ENCODE measurements at regions of chr18 and their contacts with region 1.

Region 1: GRCh38 chr18:49431165-49431962 is 29.1 kb downstream of the DYM start:
- DNase-seq: peak in 1 of 2 experiments; percentile 24
- H3K4me3 ChIP-seq: no peak overlapping the region
- H3K4me1 ChIP-seq: peaks cover 16% of the 10 kb centered on the region
- H3K27me3 ChIP-seq: no peaks in the 10 kb centered on the region

Region 2: GRCh38 chr18:48675352-48675761 is 756.0 kb before region 1 on chr18:
- in situ Hi-C with region 1: loop called (anchors 10 kb)
- DNase-seq: peak; percentile 57 to 89
- H3K4me3 ChIP-seq: no peak overlapping the region
- H3K4me1 ChIP-seq: peaks cover 3% of the 10 kb centered on the region; the same call in 1 of the 2 replicates
- H3K27me3 ChIP-seq: no peaks in the 10 kb centered on the region

Region 3: DNA sequence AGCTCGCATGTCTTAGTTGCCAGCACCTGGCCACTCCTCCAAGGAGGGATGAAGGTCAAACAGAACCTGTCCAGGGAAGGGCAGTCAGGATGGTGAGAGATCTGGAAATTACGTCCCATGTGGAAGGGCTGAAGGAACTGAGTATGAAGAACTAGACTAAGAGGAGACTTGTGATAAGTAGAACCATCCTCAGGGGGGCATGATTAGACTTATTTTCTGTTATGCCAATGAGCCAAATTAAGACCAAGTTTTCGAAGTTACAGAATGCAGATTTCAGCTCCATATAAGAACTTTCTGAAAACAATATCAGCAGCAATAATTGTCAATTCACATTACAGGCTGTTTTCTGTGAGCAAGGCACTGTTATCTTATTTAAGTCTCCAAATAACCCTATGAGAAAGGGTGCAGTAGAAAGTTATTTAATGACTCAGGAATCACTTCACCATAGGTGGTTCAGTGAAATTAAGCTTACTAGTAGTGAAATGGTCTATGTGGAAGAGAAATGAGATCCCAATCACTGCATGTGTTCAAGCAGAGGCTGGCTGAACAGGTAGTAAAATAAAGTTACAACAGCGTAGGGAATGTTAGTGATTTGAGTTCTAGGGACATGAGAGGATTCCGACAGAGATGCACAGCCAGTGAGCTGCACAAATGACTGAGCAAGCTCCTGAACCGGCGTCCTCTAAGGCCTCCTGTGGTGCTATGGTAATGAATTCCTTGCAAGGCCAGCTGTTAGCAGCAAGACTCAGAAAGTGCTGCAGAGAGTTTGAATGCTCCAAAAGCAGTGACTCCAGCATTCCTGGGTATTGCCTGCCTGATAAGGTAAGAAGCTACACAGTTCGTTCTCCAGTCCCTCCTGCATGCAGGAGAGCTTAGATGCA is 33.6 kb after region 1 on chr18:
- in situ Hi-C with region 1: no loop called
- DNase-seq: no peak
- H3K4me3 ChIP-seq: no peak overlapping the region
- H3K4me1 ChIP-seq: no peaks in the 10 kb centered on the region
- H3K27me3 ChIP-seq: no peaks in the 10 kb centered on the region

Measured in HAP-1 (cell line).